Vagina (tissue), 2 donors: ENCODE measurements at regions of chr12 and their contacts with region 1.

Region 1: GRCh38 chr12:124152731-124153130 is 142.2 kb upstream of the RFLNA start:
- DNase-seq: no peak
- H3K4me3 ChIP-seq: no peak overlapping the region
- H3K27ac ChIP-seq: no peak overlapping the region
- H3K4me1 ChIP-seq: no peaks in the 10 kb centered on the region
- H3K27me3 ChIP-seq: no peaks in the 10 kb centered on the region
- CTCF ChIP-seq: no peak
- POLR2A ChIP-seq: no peak

Region 2: DNA sequence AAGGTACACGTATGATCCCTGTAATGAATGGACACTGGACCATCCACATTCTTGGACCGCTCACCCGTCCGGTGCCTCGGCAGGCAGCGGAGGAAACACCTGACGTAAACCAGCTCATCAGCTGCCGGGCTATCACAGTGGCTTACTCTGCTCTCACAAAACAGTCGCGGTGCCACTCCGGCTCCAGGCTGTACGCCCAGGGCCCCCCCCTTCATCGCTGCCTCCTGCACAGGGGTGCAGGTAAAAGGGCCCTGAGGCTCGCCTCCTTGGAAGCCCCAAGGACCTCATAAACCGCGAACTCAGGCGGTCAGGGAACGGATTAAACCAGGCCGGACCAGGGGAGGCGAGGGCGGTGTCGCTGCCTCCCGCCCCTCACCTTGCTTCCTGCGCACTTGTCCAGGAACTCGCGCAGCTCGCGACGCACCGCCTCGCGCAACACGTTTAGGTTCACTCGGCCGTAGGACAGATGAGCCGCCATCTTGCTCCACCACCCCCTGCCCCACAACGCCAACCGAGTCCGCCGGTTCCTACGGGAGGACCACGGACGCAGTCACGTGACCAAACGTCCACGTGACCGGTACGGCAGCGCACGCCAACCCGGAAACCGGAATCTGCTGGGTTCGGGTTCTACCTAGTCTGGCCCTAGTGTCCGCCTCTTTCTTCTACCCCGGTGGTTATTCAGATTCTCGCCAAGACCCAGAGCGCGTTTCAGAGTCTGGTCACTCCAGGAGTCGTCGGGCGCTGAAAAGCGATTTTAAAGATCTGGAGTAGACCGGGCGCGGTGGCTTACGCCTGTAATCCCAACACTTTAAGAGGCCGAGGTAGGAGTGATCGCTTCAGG is 1886.6 kb before region 1 on chr12 and contains the start of gene VPS33A:
- intact Hi-C with region 1: no loop called
- DNase-seq: peak in 1 of 2 donors; percentile 96
- H3K4me3 ChIP-seq: peak within 1 kb of the TSS; percentile 80 to 88
- H3K27ac ChIP-seq: peak within 1 kb of the TSS; percentile 84
- H3K4me1 ChIP-seq: peaks cover 19% of the 10 kb centered on the region
- H3K27me3 ChIP-seq: no peaks in the 10 kb centered on the region
- CTCF ChIP-seq: no peak
- POLR2A ChIP-seq: no peak
- total RNA-seq, gene VPS33A: 11.0 TPM

Region 3: GRCh38 chr12:124026755-124027745 is 125.7 kb before region 1 on chr12:
- intact Hi-C with region 1: no loop called
- DNase-seq: no peak
- H3K4me3 ChIP-seq: no peak overlapping the region
- H3K27ac ChIP-seq: no peak overlapping the region
- H3K4me1 ChIP-seq: peaks cover 13% of the 10 kb centered on the region
- H3K27me3 ChIP-seq: no peaks in the 10 kb centered on the region
- CTCF ChIP-seq: no peak
- POLR2A ChIP-seq: no peak

Region 4: DNA sequence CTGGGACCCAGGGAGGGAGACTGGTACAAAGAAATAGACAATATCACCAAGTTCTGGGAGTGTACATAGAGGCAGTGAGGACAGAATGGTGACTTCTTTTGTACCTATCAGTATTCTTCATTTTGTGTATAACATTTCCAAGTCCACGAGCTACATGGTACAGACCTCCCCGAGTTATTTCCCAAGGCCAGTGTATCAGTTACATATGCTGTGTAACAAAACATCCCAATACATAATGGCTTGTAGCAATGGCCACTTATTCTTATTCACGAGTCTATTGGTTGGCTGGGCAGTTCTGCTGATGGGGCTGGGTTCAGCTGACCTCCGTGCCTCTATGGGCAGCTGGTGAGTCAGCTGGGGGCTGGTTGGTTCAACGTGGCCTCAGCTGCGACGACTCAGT is 43.5 kb after region 1 on chr12:
- intact Hi-C with region 1: loop called (anchors 1 kb)
- DNase-seq: no peak
- H3K4me3 ChIP-seq: no peak overlapping the region
- H3K27ac ChIP-seq: no peak overlapping the region
- H3K4me1 ChIP-seq: no peaks in the 10 kb centered on the region
- H3K27me3 ChIP-seq: no peaks in the 10 kb centered on the region
- CTCF ChIP-seq: no peak
- POLR2A ChIP-seq: no peak

Region 5: GRCh38 chr12:124248941-124249825 is 96.5 kb after region 1 on chr12:
- intact Hi-C with region 1: no loop called
- DNase-seq: no peak
- H3K4me3 ChIP-seq: no peak overlapping the region
- H3K27ac ChIP-seq: no peak overlapping the region
- H3K4me1 ChIP-seq: peaks cover 6% of the 10 kb centered on the region
- H3K27me3 ChIP-seq: no peaks in the 10 kb centered on the region
- CTCF ChIP-seq: no peak
- POLR2A ChIP-seq: no peak